AG04449 (cell line): ENCODE measurements at regions of chr22 and their contacts with region 1.

Region 1: GRCh38 chr22:37019309-37020125 is at the starts of genes MPST and TST:
- DNase-seq: no peak
- H3K4me3 ChIP-seq: peak within 1 kb of the TSS; percentile 82
- CTCF ChIP-seq: no peak

Region 2: GRCh38 chr22:37032546-37033460 is 13.3 kb after region 1 on chr22:
- CTCF ChIA-PET with region 1: interaction called, 65 read pairs
- POLR2A ChIA-PET with region 1: interaction called, 8 read pairs
- DNase-seq: no peak
- H3K4me3 ChIP-seq: no peak overlapping the region
- CTCF ChIP-seq: no peak